ENCODE measurements at regions of chr3 and their contacts with region 1.

Region 1: GRCh38 chr3:15557511-15557946 is 36.0 kb upstream of the COLQ start:
- DNase-seq: no peak
- ATAC-seq: peak; percentile 82

Region 2: GRCh38 chr3:15199493-15200105 is 357.9 kb before region 1 on chr3:
- intact Hi-C with region 1: loop called (anchors 10 kb)
- DNase-seq: no peak
- ATAC-seq: no peak

Region 3: DNA sequence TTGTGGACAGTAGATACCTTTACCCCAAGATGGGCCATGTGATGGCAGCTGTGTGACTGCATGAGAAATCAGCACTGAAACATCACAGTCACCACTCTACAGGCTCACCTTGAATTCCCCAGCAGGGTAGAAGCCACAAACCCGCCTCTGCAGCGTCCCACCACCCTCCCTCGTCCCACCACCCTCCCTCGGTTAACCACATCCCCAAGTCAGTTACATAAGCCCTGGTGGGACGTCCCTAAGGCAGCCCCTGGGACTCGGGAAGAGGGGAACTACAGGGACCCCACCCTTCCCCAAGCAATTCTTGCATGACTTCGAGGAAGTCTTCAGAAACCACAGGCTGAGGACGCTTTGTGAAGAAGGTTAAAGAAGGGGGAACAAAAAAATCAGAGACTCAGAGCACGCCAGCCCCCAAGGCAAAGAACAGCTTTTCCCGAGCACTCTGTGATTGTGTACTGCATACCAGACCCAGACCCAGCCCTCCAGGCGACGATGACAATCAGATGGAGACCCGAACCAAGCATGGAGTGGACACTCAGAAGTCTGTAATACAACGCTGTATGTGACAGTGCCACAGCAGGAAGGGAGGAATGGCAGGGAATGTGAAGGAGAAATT is 285.6 kb before region 1 on chr3:
- intact Hi-C with region 1: no loop called
- DNase-seq: peak; percentile 73
- ATAC-seq: peak; percentile 1

Region 4: DNA sequence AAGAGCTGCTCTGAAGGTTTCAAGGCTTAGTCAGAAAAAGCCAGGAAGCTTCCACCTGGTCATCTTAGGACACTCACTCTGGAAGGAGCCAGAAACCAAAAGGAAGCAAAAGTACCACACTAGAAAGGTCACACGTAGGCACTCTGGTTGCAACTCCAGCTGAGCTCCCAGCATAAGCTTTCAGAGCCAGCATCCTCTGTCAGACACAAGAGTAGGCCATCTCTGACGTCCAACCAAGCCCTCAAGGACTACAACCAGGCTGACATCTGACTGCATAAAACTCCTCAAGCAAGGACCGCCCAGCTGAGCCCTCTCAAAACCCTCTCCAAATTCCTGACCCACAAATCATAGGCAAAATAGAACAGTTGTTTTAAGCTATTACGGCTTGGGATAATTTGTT is 238.0 kb before region 1 on chr3:
- intact Hi-C with region 1: no loop called
- DNase-seq: peak; percentile 75
- ATAC-seq: peak; percentile 81